ENCODE measurements at regions of chr3 and their contacts with region 1.

Region 1: GRCh38 chr3:187738331-187739093 is 6.8 kb downstream of the BCL6 start:
- DNase-seq: peak; percentile 84
- ATAC-seq: peak; percentile 24
- H3K4me3 Mint-ChIP-seq: peak overlapping the region; percentile 100
- H3K27ac Mint-ChIP-seq: peak overlapping the region; percentile 100
- H3K4me1 Mint-ChIP-seq: peaks cover 53% of the 10 kb centered on the region
- H3K27me3 Mint-ChIP-seq: no peaks in the 10 kb centered on the region

Region 2: GRCh38 chr3:187850331-187850921 is 111.9 kb after region 1 on chr3:
- CTCF ChIA-PET with region 1: no interaction called
- POLR2A ChIA-PET with region 1: no interaction called
- DNase-seq: no peak
- ATAC-seq: no peak
- H3K4me3 Mint-ChIP-seq: no peak overlapping the region
- H3K27ac Mint-ChIP-seq: no peak overlapping the region
- H3K4me1 Mint-ChIP-seq: peaks cover 10% of the 10 kb centered on the region
- H3K27me3 Mint-ChIP-seq: no peaks in the 10 kb centered on the region

Region 3: DNA sequence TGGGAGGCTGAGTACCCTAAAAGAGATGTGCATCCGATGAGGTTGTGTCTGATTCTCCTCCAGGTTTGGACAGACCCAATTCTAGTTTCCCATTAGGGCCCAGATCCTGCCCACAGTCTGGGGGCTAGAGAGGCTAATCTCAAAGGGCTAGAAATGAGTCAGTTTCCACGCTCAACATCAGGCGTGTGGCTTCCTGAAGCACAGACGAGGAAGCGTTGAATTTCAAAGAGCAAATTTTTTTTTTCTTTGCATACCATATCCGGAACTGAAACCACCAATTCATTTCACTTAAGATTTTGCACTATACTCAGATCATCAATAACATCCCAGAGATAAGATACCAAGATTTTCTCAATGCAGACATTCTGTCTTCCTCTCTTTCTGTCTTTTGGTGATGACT is 180.5 kb after region 1 on chr3:
- CTCF ChIA-PET with region 1: interaction called, 15 read pairs
- POLR2A ChIA-PET with region 1: no interaction called
- DNase-seq: peak; percentile 83
- ATAC-seq: peak; percentile 89
- H3K4me3 Mint-ChIP-seq: peak overlapping the region; percentile 78
- H3K27ac Mint-ChIP-seq: peak overlapping the region; percentile 98
- H3K4me1 Mint-ChIP-seq: peaks cover 86% of the 10 kb centered on the region
- H3K27me3 Mint-ChIP-seq: no peaks in the 10 kb centered on the region

Region 4: DNA sequence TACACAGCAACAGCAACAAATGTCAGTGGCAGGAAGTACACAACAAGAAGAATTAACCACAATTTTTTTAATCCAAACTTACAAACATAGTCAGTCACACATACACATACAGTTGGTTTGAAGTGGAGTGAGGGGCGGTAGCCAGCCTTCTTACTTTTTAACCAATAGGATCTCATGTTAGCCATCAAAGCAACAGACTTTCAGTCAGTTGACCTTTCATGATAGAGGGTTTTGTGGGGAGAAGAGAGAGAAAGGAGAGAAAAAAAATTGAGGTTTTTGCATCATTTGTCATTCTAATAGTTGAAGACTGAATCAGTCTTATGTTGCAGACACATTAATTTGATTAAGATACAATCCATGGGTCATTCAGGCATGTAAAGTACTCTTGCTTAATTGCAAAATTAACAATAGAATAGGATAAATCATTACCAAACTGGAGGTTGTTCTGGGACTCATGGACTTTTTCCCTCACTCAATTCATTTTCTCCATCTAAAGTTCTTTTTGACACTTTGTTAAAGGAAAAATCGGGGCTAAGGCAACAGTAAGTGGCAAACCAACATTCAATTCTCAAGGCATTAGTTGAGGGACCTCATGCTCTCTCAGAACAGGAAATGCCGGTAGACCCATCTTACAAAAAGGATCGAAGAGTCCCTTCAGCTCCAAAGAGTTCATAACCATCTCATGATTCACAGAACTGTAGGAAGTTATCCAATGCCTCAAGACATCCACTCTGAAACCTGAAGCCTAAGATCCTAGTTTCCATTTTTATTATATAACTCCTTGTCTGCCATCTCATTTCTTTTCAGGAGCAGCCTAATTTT is 255.9 kb after region 1 on chr3:
- CTCF ChIA-PET with region 1: interaction called, 32 read pairs
- POLR2A ChIA-PET with region 1: interaction called, 52 read pairs
- DNase-seq: peak; percentile 67
- ATAC-seq: peak; percentile 82
- H3K4me3 Mint-ChIP-seq: peak overlapping the region; percentile 6
- H3K27ac Mint-ChIP-seq: peak overlapping the region; percentile 82
- H3K4me1 Mint-ChIP-seq: peaks cover 83% of the 10 kb centered on the region
- H3K27me3 Mint-ChIP-seq: no peaks in the 10 kb centered on the region

Region 5: DNA sequence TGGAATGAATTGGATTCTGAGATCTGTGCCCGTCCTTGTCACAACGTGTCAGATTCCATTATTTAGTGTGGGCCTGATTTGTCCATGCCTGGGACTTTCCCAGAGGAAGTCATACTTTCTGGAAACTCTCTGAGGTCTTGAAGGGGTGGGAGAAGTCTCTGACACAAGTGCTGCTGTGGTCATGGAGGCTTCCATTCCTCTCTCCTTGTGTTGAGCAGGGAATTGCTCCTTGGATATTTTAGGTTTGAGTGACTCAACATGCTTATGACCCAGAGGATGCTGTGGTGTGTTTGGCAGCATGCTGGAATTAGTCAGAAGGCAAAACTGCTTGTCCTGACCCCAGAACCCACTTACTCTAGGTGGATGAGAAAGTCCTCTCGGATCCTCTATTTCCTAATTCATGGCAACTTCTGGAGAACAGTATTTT is 547.6 kb after region 1 on chr3:
- CTCF ChIA-PET with region 1: interaction called, 36 read pairs
- POLR2A ChIA-PET with region 1: interaction called, 6 read pairs
- DNase-seq: no peak
- ATAC-seq: no peak
- H3K4me3 Mint-ChIP-seq: no peak overlapping the region
- H3K27ac Mint-ChIP-seq: no peak overlapping the region
- H3K4me1 Mint-ChIP-seq: peaks cover 24% of the 10 kb centered on the region
- H3K27me3 Mint-ChIP-seq: no peaks in the 10 kb centered on the region

Region 6: GRCh38 chr3:188362405-188362831 is 623.9 kb after region 1 on chr3:
- CTCF ChIA-PET with region 1: interaction called, 38 read pairs
- POLR2A ChIA-PET with region 1: interaction called, 5 read pairs
- DNase-seq: peak; percentile 36
- ATAC-seq: peak; percentile 40
- H3K4me3 Mint-ChIP-seq: peak overlapping the region; percentile 0
- H3K27ac Mint-ChIP-seq: no peak overlapping the region
- H3K4me1 Mint-ChIP-seq: peaks cover 52% of the 10 kb centered on the region
- H3K27me3 Mint-ChIP-seq: no peaks in the 10 kb centered on the region

Region 7: GRCh38 chr3:188914552-188914951 is 1176.0 kb after region 1 on chr3:
- CTCF ChIA-PET with region 1: interaction called, 76 read pairs
- POLR2A ChIA-PET with region 1: interaction called, 12 read pairs
- DNase-seq: no peak
- ATAC-seq: peak; percentile 51
- H3K4me3 Mint-ChIP-seq: no peak overlapping the region
- H3K27ac Mint-ChIP-seq: peak overlapping the region; percentile 76
- H3K4me1 Mint-ChIP-seq: peaks cover 41% of the 10 kb centered on the region
- H3K27me3 Mint-ChIP-seq: no peaks in the 10 kb centered on the region

Region 8: GRCh38 chr3:189148081-189148507 is 1409.6 kb after region 1 on chr3:
- CTCF ChIA-PET with region 1: interaction called, 234 read pairs
- POLR2A ChIA-PET with region 1: interaction called, 6 read pairs
- DNase-seq: peak; percentile 79
- ATAC-seq: peak; percentile 61
- H3K4me3 Mint-ChIP-seq: no peak overlapping the region
- H3K27ac Mint-ChIP-seq: no peak overlapping the region
- H3K4me1 Mint-ChIP-seq: peaks cover 24% of the 10 kb centered on the region
- H3K27me3 Mint-ChIP-seq: no peaks in the 10 kb centered on the region